ENCODE measurements at regions of chr12 and their contacts with region 1.

Region 1: DNA sequence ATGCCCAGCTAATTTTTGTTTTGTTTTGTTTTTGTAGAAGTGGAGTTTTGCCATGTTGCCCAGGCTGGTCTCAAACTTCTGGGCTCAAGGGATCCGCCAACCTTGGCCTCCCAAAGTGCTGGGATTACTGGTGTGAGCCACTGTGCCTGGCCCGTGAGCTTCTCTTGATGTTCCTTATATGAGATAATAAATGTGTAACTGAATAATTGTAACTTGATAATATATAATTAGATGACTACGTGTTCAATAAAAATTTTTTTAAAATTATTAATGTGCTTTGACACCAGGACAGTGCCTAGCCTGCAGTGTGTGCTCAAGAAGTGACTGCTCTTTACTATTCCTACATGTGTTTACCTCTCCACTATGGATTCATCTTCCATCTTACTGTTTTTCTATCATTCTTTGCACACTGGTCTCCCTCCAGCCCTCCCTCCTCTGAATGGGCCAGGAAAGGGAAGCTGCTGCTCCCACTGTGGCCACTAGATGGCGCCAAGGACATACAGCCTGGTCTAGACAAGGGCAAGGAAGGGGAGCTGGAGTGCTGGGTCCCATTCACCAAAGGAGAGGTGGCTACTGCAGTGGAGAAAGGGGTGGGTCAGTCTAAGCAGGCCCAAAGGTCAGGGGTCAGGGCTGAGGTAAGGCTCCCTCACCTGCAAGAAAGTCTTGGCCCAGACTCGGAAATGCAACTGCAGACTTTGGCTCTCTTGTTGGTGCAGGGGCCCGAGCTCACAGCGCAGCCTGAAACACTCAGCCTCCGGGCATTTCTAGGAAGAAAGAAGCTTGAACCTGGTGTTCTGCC is 14.7 kb upstream of the ZNF385A start:
- DNase-seq: peak; percentile 92
- H3K4me3 Mint-ChIP-seq: no peak overlapping the region
- H3K27ac Mint-ChIP-seq: no peak overlapping the region
- H3K4me1 Mint-ChIP-seq: peaks cover 9% of the 10 kb centered on the region
- H3K27me3 Mint-ChIP-seq: no peaks in the 10 kb centered on the region

Region 2: DNA sequence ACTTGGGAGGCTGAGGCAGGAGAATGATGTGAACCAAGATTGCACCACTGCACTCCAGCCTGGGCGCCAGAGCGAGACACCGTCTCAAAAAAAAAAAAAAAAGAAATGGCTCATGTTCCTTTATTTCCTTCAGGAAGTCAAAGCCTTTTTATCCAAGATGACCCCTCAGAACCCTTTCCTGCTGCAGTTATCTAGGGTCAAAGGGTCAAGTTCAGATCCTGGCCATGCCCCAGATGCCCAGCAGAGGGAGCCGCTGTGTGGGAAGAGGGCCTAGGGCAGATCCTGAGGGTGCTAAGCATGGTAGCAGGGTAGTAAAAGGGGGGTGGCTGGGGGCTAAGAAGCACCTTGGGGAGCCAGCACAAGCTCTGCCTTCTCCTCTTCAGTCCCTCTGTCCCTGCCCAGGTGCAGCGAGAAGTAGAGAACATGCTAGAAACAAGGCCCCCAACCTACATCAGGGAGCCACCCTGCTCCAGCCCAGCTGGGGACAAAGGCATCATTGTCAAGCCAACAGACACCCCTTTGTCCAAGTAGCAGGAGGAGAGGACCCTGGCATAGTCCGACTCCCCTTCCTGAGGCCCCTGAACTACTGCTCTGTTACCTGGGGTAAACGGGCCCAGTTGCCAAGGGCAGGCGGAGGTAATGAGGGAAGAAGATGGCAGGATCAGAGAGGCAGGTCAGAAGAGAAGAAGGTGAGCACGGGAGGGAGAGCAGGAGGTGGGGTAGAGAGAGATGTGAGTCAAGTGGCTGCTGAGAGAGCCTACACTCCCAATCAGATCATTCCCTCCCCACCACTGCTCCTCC is 104.8 kb before region 1 on chr12:
- CTCF ChIA-PET with region 1: interaction called, 10 read pairs
- POLR2A ChIA-PET with region 1: no interaction called
- intact Hi-C with region 1: no loop called
- DNase-seq: peak; percentile 79
- H3K4me3 Mint-ChIP-seq: no peak overlapping the region
- H3K27ac Mint-ChIP-seq: no peak overlapping the region
- H3K4me1 Mint-ChIP-seq: peaks cover 3% of the 10 kb centered on the region
- H3K27me3 Mint-ChIP-seq: peaks cover 2% of the 10 kb centered on the region

Region 3: GRCh38 chr12:54379401-54380201 is 19.6 kb before region 1 on chr12:
- CTCF ChIA-PET with region 1: interaction called, 57 read pairs
- POLR2A ChIA-PET with region 1: no interaction called
- intact Hi-C with region 1: no loop called
- DNase-seq: peak; percentile 94
- H3K4me3 Mint-ChIP-seq: peak overlapping the region; percentile 22
- H3K27ac Mint-ChIP-seq: no peak overlapping the region
- H3K4me1 Mint-ChIP-seq: peaks cover 10% of the 10 kb centered on the region
- H3K27me3 Mint-ChIP-seq: no peaks in the 10 kb centered on the region

Region 4: DNA sequence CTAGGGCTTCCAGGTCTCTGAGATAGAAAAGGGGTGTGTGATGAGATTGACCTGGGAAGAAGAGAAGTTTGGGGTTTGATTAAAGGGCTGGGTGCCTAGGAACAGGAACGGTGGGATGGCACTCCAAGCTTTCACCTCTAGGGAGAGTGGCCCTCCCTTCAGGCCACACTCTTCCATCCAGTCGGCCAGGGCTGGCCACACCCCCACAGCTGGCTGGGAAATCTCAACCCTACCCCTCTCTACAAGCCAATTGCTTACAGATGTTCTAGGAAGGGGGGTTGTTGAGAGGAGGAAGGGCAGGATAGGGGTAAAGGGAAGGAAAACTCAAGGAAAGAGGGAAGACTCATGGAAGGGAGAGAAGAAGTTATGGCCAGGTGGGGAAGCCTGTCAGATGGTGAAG is 26.5 kb after region 1 on chr12:
- CTCF ChIA-PET with region 1: interaction called, 693 read pairs
- POLR2A ChIA-PET with region 1: interaction called, 3 read pairs
- intact Hi-C with region 1: no loop called
- DNase-seq: no peak
- H3K4me3 Mint-ChIP-seq: no peak overlapping the region
- H3K27ac Mint-ChIP-seq: no peak overlapping the region
- H3K4me1 Mint-ChIP-seq: peaks cover 7% of the 10 kb centered on the region
- H3K27me3 Mint-ChIP-seq: peaks cover 3% of the 10 kb centered on the region

Region 5: GRCh38 chr12:54463034-54463433 is 63.8 kb after region 1 on chr12:
- CTCF ChIA-PET with region 1: interaction called, 14 read pairs
- POLR2A ChIA-PET with region 1: no interaction called
- intact Hi-C with region 1: no loop called
- DNase-seq: no peak
- H3K4me3 Mint-ChIP-seq: no peak overlapping the region
- H3K27ac Mint-ChIP-seq: no peak overlapping the region
- H3K4me1 Mint-ChIP-seq: peaks cover 7% of the 10 kb centered on the region
- H3K27me3 Mint-ChIP-seq: peaks cover 11% of the 10 kb centered on the region

Region 6: GRCh38 chr12:54535474-54535873 is 136.3 kb after region 1 on chr12:
- CTCF ChIA-PET with region 1: interaction called, 10 read pairs
- POLR2A ChIA-PET with region 1: no interaction called
- intact Hi-C with region 1: no loop called
- DNase-seq: no peak
- H3K4me3 Mint-ChIP-seq: no peak overlapping the region
- H3K27ac Mint-ChIP-seq: peak overlapping the region; percentile 61
- H3K4me1 Mint-ChIP-seq: peaks cover 34% of the 10 kb centered on the region
- H3K27me3 Mint-ChIP-seq: no peaks in the 10 kb centered on the region